CD4-positive, alpha-beta memory T cell (primary cell): ENCODE measurements at regions of chr2 and their contacts with region 1.

Region 1: DNA sequence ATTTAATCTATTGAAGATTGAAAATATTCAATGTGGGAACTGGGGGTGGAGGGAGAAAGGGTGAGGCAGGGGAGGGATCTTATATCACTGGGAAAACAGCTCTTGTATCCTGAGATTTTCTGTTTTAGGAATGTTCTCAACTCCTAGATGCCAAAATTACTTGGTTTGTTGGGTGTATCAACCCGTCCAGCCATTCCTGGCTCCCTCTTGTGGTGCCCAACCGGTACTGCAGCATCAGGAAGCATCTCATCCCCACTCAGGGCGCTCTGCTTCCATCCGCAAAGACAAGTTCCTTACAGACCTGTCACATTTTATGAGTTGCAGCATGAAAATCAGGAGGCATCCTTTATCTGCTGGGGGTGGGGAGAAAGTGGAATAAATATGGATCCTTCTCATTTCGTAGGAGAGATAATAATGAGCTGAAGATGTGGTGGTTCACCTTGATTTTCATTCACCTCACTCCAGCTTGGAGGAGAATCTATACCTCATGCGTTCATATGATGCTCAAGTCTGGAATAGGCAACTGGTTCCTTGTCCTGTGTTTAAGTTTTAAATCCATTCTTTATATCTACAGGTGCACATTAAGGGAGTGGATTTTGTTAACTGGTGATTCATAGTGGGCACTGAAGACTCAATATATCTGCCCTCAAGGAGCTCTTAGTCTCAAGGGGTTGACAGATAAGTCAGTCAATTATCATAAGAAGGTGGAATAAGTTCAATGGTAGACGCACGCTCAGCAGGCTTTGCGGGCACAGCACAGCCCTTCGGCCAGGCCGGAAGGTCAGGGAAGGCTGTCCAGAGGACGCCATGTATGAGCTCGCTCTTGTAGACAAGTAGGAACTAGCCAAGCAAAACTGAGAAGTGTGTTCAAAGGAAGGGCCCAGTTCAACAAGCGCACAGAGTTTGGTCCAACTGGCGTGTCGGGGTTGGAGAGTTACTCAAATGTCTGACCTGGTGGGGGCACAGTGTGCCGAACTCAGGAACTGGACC is 127.3 kb downstream of the RNF144A start:
- DNase-seq: peak; percentile 55 to 63 (median 58)
- H3K4me3 ChIP-seq: no peak overlapping the region
- H3K4me3 Mint-ChIP-seq: no peak overlapping the region
- H3K27ac ChIP-seq: no peak overlapping the region
- H3K27ac Mint-ChIP-seq: peak overlapping the region in 2 of 7 donors; percentile 38 to 90
- H3K4me1 ChIP-seq: no peaks in the 10 kb centered on the region
- H3K4me1 Mint-ChIP-seq: peaks cover 6 to 14% (median 11%) of the 10 kb centered on the region in 4 donors
- H3K27me3 ChIP-seq: no peaks in the 10 kb centered on the region
- H3K27me3 Mint-ChIP-seq: no peaks in the 10 kb centered on the region

Region 2: GRCh38 chr2:6692056-6692455 is 352.5 kb before region 1 on chr2:
- CTCF ChIA-PET with region 1: no interaction called
- POLR2A ChIA-PET with region 1: no interaction called
- intact Hi-C with region 1: no loop called
- DNase-seq: no peak
- H3K4me3 ChIP-seq: no peak overlapping the region
- H3K4me3 Mint-ChIP-seq: no peak overlapping the region
- H3K27ac ChIP-seq: no peak overlapping the region
- H3K27ac Mint-ChIP-seq: no peak overlapping the region
- H3K4me1 ChIP-seq: no peaks in the 10 kb centered on the region
- H3K4me1 Mint-ChIP-seq: no peaks in the 10 kb centered on the region
- H3K27me3 ChIP-seq: no peaks in the 10 kb centered on the region
- H3K27me3 Mint-ChIP-seq: peaks cover 2% of the 10 kb centered on the region in 2 donors

Region 3: GRCh38 chr2:6826081-6826913 is 218.3 kb before region 1 on chr2:
- CTCF ChIA-PET with region 1: interaction called, 18 read pairs
- POLR2A ChIA-PET with region 1: no interaction called
- intact Hi-C with region 1: loop called (anchors 1 kb)
- DNase-seq: peak; percentile 40 to 50 (median 46)
- H3K4me3 ChIP-seq: no peak overlapping the region
- H3K4me3 Mint-ChIP-seq: no peak overlapping the region
- H3K27ac ChIP-seq: no peak overlapping the region
- H3K27ac Mint-ChIP-seq: no peak overlapping the region
- H3K4me1 ChIP-seq: no peaks in the 10 kb centered on the region
- H3K4me1 Mint-ChIP-seq: peaks cover 8 to 12% (median 9%) of the 10 kb centered on the region in 4 donors
- H3K27me3 ChIP-seq: no peaks in the 10 kb centered on the region
- H3K27me3 Mint-ChIP-seq: no peaks in the 10 kb centered on the region

Region 4: DNA sequence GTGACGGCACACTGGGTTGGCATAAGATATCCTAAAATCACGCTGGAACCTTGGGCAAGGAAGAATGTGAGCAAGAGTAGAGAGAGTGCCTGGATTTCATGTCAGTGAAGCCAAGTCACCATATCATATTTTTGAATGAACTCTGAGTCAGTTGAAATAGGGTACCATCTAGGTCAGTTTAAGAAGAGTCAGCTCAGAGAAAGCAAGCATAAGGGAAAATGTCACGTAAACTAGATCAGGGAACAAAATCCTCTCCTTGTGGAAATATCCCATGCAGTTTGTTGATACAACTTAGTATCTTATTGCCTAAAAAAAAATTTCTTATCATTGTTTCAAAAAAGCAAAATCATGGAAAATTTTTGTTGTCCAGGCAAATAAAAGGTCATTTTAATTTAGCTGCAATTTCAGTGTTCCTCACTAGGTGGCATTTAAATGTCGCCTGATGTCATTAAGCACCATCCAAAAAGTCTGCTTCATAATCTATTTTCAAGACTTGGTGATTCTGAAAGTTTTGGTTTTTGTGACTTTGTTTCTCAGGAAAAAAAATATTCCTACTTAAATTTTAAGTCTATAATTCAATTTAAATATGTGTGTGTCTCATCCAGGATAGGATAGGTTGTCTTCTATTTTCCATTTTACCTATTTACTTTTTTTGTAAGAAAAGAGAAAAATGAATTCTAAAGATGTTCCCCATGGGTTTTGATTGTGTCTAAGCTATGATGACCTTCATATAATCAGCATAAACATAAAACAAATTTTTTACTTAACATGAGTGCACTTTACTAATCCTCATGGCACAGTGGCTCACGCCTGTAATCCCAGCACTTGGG is 147.4 kb before region 1 on chr2:
- CTCF ChIA-PET with region 1: interaction called, 188 read pairs
- POLR2A ChIA-PET with region 1: interaction called, 8 read pairs
- intact Hi-C with region 1: loop called (anchors 1 kb)
- DNase-seq: peak in 4 of 5 donors; percentile 39 to 51 (median 46)
- H3K4me3 ChIP-seq: no peak overlapping the region
- H3K4me3 Mint-ChIP-seq: no peak overlapping the region
- H3K27ac ChIP-seq: no peak overlapping the region
- H3K27ac Mint-ChIP-seq: peak overlapping the region in 1 of 7 donors; percentile 16
- H3K4me1 ChIP-seq: no peaks in the 10 kb centered on the region
- H3K4me1 Mint-ChIP-seq: peaks cover 0 to 10% (median 0%) of the 10 kb centered on the region in 4 donors
- H3K27me3 ChIP-seq: no peaks in the 10 kb centered on the region
- H3K27me3 Mint-ChIP-seq: no peaks in the 10 kb centered on the region

Region 5: DNA sequence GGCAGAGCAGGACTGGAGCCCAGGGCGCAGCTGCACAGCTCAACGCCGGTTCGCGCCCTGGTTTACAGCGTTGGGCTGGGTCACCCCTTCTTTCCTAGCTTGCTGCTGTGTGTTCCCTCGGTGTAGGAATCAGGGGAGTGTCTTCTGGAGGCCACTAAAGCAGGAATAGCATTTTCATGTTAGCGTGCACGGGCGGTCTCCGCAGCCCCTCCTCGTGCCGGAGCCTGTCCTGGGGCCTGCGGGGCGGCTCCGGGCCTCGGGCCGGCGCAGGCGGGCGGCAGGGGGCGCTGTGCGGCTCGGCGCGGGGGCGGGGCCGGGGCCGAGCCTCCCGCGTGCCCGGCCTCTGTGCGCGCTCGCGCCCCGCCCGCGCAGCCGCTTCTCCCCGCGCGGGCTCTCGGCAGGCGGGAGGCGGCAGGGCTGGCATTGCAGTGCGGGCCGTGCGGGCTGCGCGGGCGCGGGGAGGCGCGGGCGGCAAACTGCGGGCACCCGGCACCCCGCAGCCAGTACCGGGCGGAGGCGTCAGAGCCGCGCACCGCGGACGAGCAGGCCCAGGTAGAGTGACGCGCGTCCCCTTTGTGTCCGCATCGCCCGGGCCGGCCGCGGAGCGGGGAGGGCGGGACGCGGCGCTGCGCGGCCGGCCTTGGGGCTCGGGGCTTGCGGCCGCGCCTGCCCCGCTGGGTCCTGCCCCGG is 127.3 kb before region 1 on chr2 and contains the start of gene RNF144A:
- CTCF ChIA-PET with region 1: interaction called, 21 read pairs
- POLR2A ChIA-PET with region 1: no interaction called
- intact Hi-C with region 1: no loop called
- DNase-seq: peak; percentile 64 to 83 (median 76)
- H3K4me3 ChIP-seq: peak within 1 kb of the TSS; percentile 44 to 47
- H3K4me3 Mint-ChIP-seq: peak within 1 kb of the TSS; percentile 72 to 84 (median 78)
- H3K27ac ChIP-seq: peak within 1 kb of the TSS; percentile 43
- H3K27ac Mint-ChIP-seq: peak within 1 kb of the TSS in 5 of 7 donors; percentile 57 to 88 (median 74)
- H3K4me1 ChIP-seq: peaks cover 68% of the 10 kb centered on the region
- H3K4me1 Mint-ChIP-seq: peaks cover 46 to 79% (median 60%) of the 10 kb centered on the region in 4 donors
- H3K27me3 ChIP-seq: no peaks in the 10 kb centered on the region
- H3K27me3 Mint-ChIP-seq: no peaks in the 10 kb centered on the region
- total RNA-seq, gene RNF144A: 34.3 to 41.1 TPM

Region 6: GRCh38 chr2:6999211-6999877 is 45.2 kb before region 1 on chr2:
- CTCF ChIA-PET with region 1: interaction called, 12 read pairs
- POLR2A ChIA-PET with region 1: no interaction called
- intact Hi-C with region 1: no loop called
- DNase-seq: no peak
- H3K4me3 ChIP-seq: no peak overlapping the region
- H3K4me3 Mint-ChIP-seq: no peak overlapping the region
- H3K27ac ChIP-seq: no peak overlapping the region
- H3K27ac Mint-ChIP-seq: peak overlapping the region in 3 of 7 donors; percentile 19 to 29 (median 22)
- H3K4me1 ChIP-seq: no peaks in the 10 kb centered on the region
- H3K4me1 Mint-ChIP-seq: peaks cover 0 to 26% (median 5%) of the 10 kb centered on the region in 4 donors
- H3K27me3 ChIP-seq: no peaks in the 10 kb centered on the region
- H3K27me3 Mint-ChIP-seq: no peaks in the 10 kb centered on the region

Region 7: DNA sequence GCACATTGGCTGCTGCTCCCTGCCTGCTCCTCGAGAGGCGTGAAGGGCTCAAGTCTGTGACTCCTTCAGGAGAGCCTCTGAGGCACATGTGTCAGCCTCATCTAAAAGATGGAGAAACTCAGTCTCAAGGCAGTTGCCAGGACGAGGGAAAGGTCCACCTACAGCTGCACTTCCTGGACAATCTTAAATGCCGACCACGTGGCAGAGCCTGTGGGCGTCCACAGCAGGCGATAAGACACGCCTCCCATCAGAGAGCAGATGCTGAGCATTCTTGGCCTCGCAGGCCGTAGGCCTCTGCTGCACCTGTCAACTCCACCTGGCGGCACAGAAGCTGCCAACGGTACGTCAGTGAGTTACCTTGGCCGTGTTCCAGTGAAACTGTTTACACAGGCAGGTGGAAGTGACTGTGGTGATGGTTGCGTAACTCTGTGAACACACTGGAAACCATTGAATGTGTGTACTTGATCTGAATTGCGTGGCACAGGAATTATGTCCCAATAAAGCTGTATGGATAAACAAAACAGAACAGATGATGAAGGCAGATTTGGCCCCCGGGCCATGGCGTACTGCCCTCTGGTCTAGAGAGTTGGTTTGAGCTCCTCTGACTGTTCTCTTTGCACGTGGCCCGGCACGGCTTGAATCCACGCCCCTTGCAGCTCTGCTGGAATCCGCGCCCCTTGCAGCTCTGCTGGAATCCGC is 12.9 kb before region 1 on chr2:
- CTCF ChIA-PET with region 1: interaction called, 46 read pairs
- POLR2A ChIA-PET with region 1: no interaction called
- intact Hi-C with region 1: no loop called
- DNase-seq: peak; percentile 74 to 87 (median 80)
- H3K4me3 ChIP-seq: no peak overlapping the region
- H3K4me3 Mint-ChIP-seq: peak overlapping the region in 1 of 8 donors; percentile 65
- H3K27ac ChIP-seq: peak overlapping the region; percentile 15
- H3K27ac Mint-ChIP-seq: peak overlapping the region; percentile 76 to 93 (median 88)
- H3K4me1 ChIP-seq: peaks cover 12% of the 10 kb centered on the region
- H3K4me1 Mint-ChIP-seq: peaks cover 11 to 34% (median 21%) of the 10 kb centered on the region in 4 donors
- H3K27me3 ChIP-seq: no peaks in the 10 kb centered on the region
- H3K27me3 Mint-ChIP-seq: no peaks in the 10 kb centered on the region

Region 8: GRCh38 chr2:7071154-7071553 is 26.6 kb after region 1 on chr2:
- CTCF ChIA-PET with region 1: interaction called, 13 read pairs
- POLR2A ChIA-PET with region 1: no interaction called
- intact Hi-C with region 1: no loop called
- DNase-seq: no peak
- H3K4me3 ChIP-seq: no peak overlapping the region
- H3K4me3 Mint-ChIP-seq: no peak overlapping the region
- H3K27ac ChIP-seq: no peak overlapping the region
- H3K27ac Mint-ChIP-seq: no peak overlapping the region
- H3K4me1 ChIP-seq: no peaks in the 10 kb centered on the region
- H3K4me1 Mint-ChIP-seq: peaks cover 0 to 5% (median under 1%) of the 10 kb centered on the region in 4 donors
- H3K27me3 ChIP-seq: no peaks in the 10 kb centered on the region
- H3K27me3 Mint-ChIP-seq: no peaks in the 10 kb centered on the region